ENCODE measurements at regions of chr2 and their contacts with region 1.

Region 1: GRCh38 chr2:62406573-62407043 is 99.4 kb downstream of the TMEM17 start:
- DNase-seq: peak in 2 of 3 donors; percentile 62 to 64
- ATAC-seq: peak; percentile 90 to 98 (median 94)
- H3K4me3 ChIP-seq: no peak overlapping the region
- H3K27ac ChIP-seq: no peak overlapping the region
- H3K4me1 ChIP-seq: peaks cover 0 to 8% (median 0%) of the 10 kb centered on the region in 4 donors
- H3K27me3 ChIP-seq: no peaks in the 10 kb centered on the region
- CTCF ChIP-seq: no peak
- POLR2A ChIP-seq: no peak

Region 2: GRCh38 chr2:61928826-61929461 is 477.7 kb before region 1 on chr2:
- intact Hi-C with region 1: loop called in 1 of 2 experiments (anchors 10 kb)
- DNase-seq: no peak
- ATAC-seq: no peak
- H3K4me3 ChIP-seq: no peak overlapping the region
- H3K27ac ChIP-seq: no peak overlapping the region
- H3K4me1 ChIP-seq: no peaks in the 10 kb centered on the region
- H3K27me3 ChIP-seq: no peaks in the 10 kb centered on the region
- CTCF ChIP-seq: no peak
- POLR2A ChIP-seq: no peak

Region 3: DNA sequence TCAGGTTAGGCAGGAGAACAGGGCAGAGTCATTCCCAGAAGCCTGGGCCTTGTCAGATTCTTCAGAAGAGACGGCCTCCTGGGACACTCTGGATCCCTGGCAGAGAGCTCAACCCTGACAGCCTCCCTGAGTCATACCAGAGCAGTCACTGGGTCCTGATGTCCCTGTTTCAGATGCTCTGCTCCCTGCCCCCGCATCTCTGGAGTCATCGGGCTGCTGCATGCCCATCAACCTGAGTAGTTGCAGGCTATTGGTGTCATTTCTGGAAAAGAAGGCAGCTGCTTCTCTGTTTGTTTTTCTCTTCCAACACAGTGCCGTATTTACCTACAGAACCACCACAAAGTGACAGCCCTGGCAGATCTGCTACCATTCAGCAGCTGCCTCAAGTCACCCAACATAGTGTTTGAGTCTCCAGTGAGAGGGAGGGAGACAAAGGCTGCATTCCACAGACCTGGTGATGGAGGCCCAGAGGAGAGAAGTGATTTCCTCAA is 65.6 kb before region 1 on chr2:
- intact Hi-C with region 1: no loop called
- DNase-seq: peak in 1 of 3 donors; percentile 57
- ATAC-seq: peak in 2 of 4 donors; percentile 31 to 76
- H3K4me3 ChIP-seq: no peak overlapping the region
- H3K27ac ChIP-seq: no peak overlapping the region
- H3K4me1 ChIP-seq: peaks cover 0 to 3% (median 0%) of the 10 kb centered on the region in 4 donors
- H3K27me3 ChIP-seq: no peaks in the 10 kb centered on the region
- CTCF ChIP-seq: no peak
- POLR2A ChIP-seq: no peak

Region 4: GRCh38 chr2:62456721-62457539 is 50.3 kb after region 1 on chr2:
- intact Hi-C with region 1: no loop called
- DNase-seq: peak; percentile 82 to 85 (median 84)
- ATAC-seq: peak; percentile 85 to 90 (median 86)
- H3K4me3 ChIP-seq: peak overlapping the region; percentile 64 to 76 (median 69)
- H3K27ac ChIP-seq: peak overlapping the region; percentile 89 to 91 (median 89)
- H3K4me1 ChIP-seq: peaks cover 0 to 37% (median 18%) of the 10 kb centered on the region in 4 donors
- H3K27me3 ChIP-seq: no peaks in the 10 kb centered on the region
- CTCF ChIP-seq: peak; percentile 92 to 99 (median 98)
- POLR2A ChIP-seq: no peak